ENCODE measurements at regions of chr5 and their contacts with region 1.

Region 1: GRCh38 chr5:154520861-154521453 is 42.9 kb upstream of the HAND1 start:
- DNase-seq: peak; percentile 62
- CTCF ChIP-seq: peak; percentile 68

Region 2: DNA sequence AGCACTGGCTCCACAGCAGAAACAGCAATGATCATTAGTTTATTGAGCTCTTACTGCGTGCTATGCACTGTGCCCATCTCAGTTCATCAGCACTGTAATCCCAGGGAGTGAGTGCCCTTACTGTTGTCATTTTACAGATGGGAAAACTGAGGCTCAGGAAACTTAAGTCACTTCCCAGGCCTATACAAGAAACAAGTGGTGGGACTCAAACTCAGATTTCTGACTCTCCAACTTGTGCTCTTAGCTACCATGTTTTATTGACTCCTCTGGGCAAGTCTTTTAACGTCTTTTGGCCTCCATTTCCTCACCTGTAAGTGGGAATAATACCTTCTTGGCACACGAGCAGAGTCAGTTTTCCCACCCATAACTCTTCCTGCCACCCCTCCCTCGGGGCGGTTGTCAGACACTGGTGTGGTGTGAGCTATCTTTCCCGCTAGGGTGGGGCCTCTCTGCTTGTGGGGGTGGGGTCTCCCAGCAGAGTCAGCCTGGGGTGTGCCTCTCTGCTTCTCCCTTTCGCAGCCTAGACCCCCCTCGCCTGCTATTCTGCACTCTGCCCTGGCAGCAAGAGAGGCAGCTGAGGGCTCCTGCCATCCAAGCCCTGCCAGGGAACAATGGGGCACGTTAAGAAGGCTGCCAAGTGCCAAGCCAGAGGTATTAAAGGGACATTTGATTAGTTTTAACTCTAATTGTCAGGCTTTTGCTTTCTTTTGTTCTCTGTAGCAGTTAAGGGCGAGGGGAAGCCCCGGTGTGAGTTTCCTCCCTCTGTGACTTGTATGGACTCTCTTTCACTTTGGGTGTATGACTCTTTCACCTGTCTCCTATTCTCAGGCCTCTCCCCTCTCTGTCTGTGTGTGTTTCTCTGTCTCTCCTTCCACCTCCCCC is 318.3 kb before region 1 on chr5:
- CTCF ChIA-PET with region 1: no interaction called
- POLR2A ChIA-PET with region 1: no interaction called
- DNase-seq: peak; percentile 77
- CTCF ChIP-seq: no peak

Region 3: GRCh38 chr5:154487541-154487940 is 33.4 kb before region 1 on chr5:
- CTCF ChIA-PET with region 1: interaction called, 10 read pairs
- POLR2A ChIA-PET with region 1: no interaction called
- DNase-seq: peak; percentile 84
- CTCF ChIP-seq: no peak

Region 4: DNA sequence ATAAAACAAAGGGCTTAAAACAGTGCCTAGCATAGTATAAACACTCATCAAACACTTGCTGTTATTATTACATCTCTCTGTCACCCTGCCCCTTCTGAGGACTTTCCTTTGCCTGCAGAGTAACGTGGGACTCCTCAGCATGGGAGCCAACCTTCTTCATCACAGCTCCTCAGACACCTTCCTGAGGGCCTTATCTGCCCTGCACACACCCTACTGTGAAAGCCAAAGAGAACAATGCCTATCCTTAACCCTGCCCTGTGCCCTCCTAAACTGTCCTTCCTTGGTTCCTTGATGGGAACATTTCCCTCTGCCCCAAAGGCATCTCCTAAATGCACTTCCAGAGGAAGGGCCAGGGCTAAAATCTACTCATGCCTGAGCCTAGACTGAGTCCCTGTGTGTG is 22.4 kb before region 1 on chr5:
- CTCF ChIA-PET with region 1: interaction called, 92 read pairs
- POLR2A ChIA-PET with region 1: no interaction called
- DNase-seq: no peak
- CTCF ChIP-seq: no peak

Region 5: DNA sequence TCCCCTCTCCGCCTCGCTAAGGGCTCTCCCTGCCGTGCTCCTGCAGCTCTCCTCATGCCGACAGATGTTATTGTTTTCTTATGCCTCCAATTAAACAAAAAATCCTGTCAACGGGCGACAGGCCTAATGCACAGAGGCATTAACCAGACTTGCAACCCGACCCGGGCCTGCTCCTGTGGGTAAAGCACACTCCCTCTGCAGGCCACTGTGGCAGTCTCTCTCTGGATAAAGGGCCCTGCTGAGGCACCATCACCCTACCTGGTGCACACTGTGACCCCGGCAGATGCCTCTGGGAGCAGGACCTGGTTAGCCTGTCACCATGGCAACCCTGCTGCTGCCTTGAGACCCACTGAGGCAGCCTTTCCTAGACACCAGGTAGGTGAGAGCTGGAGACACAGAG is 15.3 kb before region 1 on chr5:
- CTCF ChIA-PET with region 1: interaction called, 92 read pairs
- POLR2A ChIA-PET with region 1: no interaction called
- DNase-seq: no peak
- CTCF ChIP-seq: no peak

Region 6: GRCh38 chr5:154534457-154535050 is 13.6 kb after region 1 on chr5:
- CTCF ChIA-PET with region 1: interaction called, 45 read pairs
- POLR2A ChIA-PET with region 1: no interaction called
- DNase-seq: no peak
- CTCF ChIP-seq: no peak

Region 7: GRCh38 chr5:154575546-154576428 is 54.8 kb after region 1 on chr5:
- CTCF ChIA-PET with region 1: interaction called, 29 read pairs
- POLR2A ChIA-PET with region 1: no interaction called
- DNase-seq: peak; percentile 76
- CTCF ChIP-seq: peak; percentile 25

Region 8: DNA sequence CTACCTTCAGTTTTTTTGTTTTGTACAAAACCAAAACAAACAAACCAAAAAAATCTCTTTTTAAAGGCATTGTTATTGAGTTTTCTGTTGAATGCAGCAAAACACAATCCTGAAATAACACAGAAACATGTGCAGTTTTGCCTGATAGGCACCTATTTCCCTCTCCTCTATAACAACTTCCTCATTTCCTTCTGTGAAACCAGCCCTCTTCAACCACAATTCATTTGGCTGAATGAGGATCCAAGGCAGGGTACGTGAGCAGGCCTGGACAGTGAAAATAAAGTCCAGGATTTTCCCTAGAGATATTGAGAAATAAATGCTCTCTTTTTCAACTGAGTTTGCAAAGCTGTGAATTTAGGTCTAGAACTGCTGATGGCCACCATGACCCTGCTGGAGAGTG is 99.5 kb after region 1 on chr5:
- CTCF ChIA-PET with region 1: no interaction called
- POLR2A ChIA-PET with region 1: no interaction called
- DNase-seq: no peak
- CTCF ChIP-seq: no peak

Region 9: GRCh38 chr5:154669402-154669801 is 148.4 kb after region 1 on chr5:
- CTCF ChIA-PET with region 1: no interaction called
- POLR2A ChIA-PET with region 1: no interaction called
- DNase-seq: no peak
- CTCF ChIP-seq: no peak

Measured in GM10248 (cell line).